HEK293T (cell line): ENCODE measurements at regions of chrX and their contacts with region 1.

Region 1: DNA sequence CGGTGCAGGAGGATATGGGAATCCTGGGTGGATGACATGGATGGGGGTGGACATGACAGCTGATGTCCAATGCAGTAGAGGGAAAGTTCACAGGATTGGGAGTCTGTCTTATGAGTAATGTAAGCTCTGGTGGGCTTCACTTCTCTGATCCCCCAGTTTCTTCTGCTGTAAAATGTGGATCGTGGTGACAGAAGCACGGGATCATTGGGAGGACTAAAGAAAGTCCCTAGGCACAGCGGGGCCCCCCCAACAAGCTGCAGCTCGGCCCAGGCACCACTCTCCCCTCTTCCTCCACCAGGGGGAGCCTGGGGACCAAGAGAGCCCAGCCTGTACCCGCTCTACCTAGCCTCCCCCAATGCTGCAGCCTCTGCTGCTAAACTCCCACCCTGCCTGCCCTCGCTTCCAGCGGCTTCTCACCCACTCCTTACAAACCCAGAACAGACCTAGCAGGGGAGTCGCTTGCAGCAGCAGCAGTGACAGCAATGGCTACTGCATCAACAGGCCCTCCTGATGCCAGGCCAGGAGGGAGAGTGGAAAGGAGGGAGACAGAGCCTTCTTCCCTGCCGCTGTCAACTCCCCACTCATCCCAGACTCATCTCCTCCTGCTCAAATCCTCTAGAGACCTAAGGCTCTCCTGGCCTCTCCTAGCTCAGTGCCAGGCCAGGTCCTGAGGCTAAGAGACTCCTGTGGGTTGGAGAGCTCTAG is 36.1 kb upstream of the IQSEC2 start:
- DNase-seq: peak; percentile 82

Region 2: DNA sequence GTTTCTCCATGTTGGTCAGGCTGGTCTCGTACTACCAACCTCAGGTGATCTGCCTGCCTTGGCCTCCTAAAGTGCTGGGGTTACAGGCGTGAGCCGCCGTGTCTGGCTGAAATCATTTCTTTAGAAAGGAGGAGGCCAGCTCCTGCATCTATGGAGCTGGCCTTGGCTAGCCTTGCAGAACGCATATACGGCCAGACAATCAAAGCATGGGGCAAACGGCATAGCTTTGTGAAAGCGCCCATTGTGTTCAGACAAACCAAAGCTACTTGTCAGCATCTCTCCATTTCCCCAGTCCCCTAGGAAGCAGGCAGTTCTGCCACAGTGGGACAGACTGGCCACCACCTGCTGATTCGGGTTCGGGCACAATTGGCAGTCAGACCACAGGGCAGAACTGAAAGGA is 12.8 kb after region 1 on chrX:
- CTCF ChIA-PET with region 1: interaction called, 16 read pairs
- POLR2A ChIA-PET with region 1: interaction called, 4 read pairs
- DNase-seq: no peak

Region 3: GRCh38 chrX:53412446-53412845 is 94.9 kb after region 1 on chrX:
- CTCF ChIA-PET with region 1: no interaction called
- POLR2A ChIA-PET with region 1: no interaction called
- DNase-seq: no peak

Region 4: DNA sequence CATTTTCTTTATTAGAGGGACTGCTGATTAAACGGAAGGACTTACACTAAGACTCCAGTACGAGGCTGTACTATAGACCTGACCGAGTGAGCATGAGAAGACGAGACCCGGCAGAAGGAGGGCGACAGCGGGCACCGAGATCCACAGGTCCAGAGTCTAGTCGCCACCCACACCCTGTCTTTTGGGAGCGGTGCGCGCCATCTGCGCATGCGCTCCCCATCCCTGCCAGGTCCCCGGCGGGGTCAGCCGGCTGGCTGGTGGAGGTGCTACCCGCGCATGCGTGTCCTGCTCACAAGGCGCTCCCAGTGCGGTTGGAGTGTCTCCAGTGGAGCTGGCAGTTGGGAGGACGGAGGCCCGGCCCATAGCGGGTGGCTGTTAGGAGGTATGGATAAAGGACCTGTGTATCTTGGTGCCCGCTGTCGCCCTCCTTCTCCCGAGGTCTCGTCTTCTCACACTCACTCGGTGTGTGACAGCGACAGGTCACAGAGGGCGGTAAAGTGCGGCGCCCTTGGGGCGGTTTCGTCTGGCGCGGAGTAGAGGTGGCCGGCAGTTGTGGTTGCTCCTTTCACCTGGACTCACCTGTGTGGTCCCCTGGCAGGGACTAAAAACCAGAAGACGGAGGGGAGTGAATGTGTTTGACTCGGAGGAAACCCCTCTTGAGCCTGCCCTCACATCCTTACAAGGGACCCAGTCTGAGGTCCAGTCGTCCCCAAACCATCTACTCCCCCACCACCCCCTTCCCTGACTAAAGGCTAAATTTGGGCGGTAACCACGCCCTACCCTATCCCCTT is 124.2 kb after region 1 on chrX:
- CTCF ChIA-PET with region 1: interaction called, 24 read pairs
- POLR2A ChIA-PET with region 1: interaction called, 5 read pairs
- DNase-seq: peak; percentile 94

Region 5: GRCh38 chrX:53511322-53511721 is 193.8 kb after region 1 on chrX:
- CTCF ChIA-PET with region 1: no interaction called
- POLR2A ChIA-PET with region 1: no interaction called
- DNase-seq: no peak